Ascending aorta (tissue), 2 donors: ENCODE measurements at regions of chr1 and their contacts with region 1.

Region 1: GRCh38 chr1:33616773-33617172 is 144.3 kb downstream of the ZSCAN20 start:
- DNase-seq: peak in 1 of 2 donors; percentile 43
- H3K4me3 ChIP-seq: no peak overlapping the region
- H3K27ac ChIP-seq: no peak overlapping the region
- H3K4me1 ChIP-seq: no peaks in the 10 kb centered on the region
- H3K27me3 ChIP-seq: no peaks in the 10 kb centered on the region
- CTCF ChIP-seq: no peak

Region 2: GRCh38 chr1:33219881-33220661 is 396.7 kb before region 1 on chr1:
- intact Hi-C with region 1: loop called (anchors 2 kb)
- DNase-seq: no peak
- H3K4me3 ChIP-seq: no peak overlapping the region
- H3K27ac ChIP-seq: no peak overlapping the region
- H3K4me1 ChIP-seq: peaks cover 0 to 2% of the 10 kb centered on the region in 2 donors
- H3K27me3 ChIP-seq: no peaks in the 10 kb centered on the region
- CTCF ChIP-seq: no peak

Region 3: DNA sequence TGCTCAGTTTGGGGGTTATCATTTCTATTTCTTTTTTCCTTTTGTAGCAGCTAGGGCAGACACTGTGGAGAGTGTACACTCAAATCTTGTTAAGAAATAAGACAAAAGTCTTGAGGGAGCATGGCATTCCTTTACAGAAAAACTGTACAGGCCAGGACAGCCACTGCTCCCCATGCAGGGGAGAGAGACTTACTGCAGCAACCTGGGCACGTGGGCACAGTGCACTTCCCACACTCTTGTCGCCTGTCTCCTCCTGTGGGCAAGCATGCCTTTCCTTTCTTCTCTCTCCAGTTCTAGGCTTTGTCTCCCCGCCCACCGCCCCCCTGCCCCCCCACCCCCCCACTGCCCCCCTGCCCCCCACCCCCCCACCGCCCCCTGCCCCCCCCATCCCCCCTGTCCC is 237.8 kb before region 1 on chr1:
- intact Hi-C with region 1: loop called (anchors 10 kb)
- DNase-seq: peak in 1 of 2 donors; percentile 35
- H3K4me3 ChIP-seq: no peak overlapping the region
- H3K27ac ChIP-seq: no peak overlapping the region
- H3K4me1 ChIP-seq: peaks cover 0 to 3% of the 10 kb centered on the region in 2 donors
- H3K27me3 ChIP-seq: no peaks in the 10 kb centered on the region
- CTCF ChIP-seq: no peak

Region 4: DNA sequence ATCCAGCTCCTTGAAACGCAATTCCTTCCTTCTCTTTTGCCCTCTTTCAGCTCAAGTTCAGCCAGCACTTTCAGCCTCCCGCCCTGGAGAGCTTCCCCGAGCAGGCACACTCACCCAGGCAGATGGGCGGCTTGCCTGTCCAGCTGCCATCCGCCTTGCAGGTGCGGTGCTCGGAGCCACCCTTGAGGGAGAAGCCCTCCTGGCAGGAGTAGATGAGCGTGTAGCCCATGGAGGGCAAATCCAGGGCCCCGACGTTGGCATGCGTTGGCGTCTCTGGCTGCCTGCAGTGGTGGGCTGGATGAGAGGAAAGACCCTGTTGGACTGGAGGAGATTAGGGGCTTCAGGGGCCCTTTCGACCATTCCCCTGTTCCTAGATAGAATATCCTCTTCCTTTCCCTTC is 83.8 kb before region 1 on chr1:
- intact Hi-C with region 1: no loop called
- DNase-seq: no peak
- H3K4me3 ChIP-seq: no peak overlapping the region
- H3K27ac ChIP-seq: no peak overlapping the region
- H3K4me1 ChIP-seq: no peaks in the 10 kb centered on the region
- H3K27me3 ChIP-seq: no peaks in the 10 kb centered on the region
- CTCF ChIP-seq: no peak

Region 5: GRCh38 chr1:33641104-33641830 is 24.5 kb after region 1 on chr1:
- intact Hi-C with region 1: no loop called
- DNase-seq: no peak
- H3K4me3 ChIP-seq: no peak overlapping the region
- H3K27ac ChIP-seq: no peak overlapping the region
- H3K4me1 ChIP-seq: no peaks in the 10 kb centered on the region
- H3K27me3 ChIP-seq: no peaks in the 10 kb centered on the region
- CTCF ChIP-seq: peak in 1 of 3 experiments; percentile 22